Sciatic nerve (tissue), 2 donors: ENCODE measurements at regions of chr2 and their contacts with region 1.

Region 1: GRCh38 chr2:215949991-215950404 is 63.4 kb downstream of the MREG start:
- DNase-seq: no peak
- ATAC-seq: peak; percentile 38

Region 2: GRCh38 chr2:216034065-216034464 is 84.1 kb after region 1 on chr2:
- intact Hi-C with region 1: no loop called
- DNase-seq: peak; percentile 73
- ATAC-seq: peak; percentile 67

Region 3: DNA sequence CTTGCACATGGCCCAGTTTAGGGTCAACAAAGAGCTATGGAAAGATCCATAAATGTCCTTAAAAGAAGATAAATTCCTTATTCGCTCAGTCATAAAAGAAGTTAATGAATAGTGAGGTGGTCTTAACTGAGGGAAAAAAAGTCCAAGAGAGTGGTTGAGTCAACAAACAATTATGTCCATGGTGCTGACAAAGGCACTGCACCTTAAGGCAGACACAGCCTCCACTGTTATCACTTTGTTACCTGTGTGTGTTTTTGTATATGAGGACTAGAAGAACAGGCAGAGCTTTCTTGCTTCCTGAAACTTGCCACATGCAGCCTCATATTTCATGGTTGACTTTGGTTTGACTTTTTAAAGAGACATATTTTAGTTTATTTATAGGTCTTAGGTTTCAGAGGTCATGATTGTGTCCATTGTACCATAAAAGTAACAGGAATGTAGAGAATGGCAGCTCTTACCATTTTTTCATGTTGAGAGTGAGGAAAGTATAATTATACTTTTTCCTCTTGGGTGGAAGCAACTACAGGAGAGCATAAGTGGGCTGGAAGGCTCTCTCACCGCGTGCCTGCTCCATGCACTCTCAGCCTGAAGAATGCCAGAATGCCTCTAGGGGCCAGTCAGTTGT is 252.7 kb after region 1 on chr2:
- intact Hi-C with region 1: loop called (anchors 5 kb)
- DNase-seq: no peak
- ATAC-seq: no peak

Region 4: DNA sequence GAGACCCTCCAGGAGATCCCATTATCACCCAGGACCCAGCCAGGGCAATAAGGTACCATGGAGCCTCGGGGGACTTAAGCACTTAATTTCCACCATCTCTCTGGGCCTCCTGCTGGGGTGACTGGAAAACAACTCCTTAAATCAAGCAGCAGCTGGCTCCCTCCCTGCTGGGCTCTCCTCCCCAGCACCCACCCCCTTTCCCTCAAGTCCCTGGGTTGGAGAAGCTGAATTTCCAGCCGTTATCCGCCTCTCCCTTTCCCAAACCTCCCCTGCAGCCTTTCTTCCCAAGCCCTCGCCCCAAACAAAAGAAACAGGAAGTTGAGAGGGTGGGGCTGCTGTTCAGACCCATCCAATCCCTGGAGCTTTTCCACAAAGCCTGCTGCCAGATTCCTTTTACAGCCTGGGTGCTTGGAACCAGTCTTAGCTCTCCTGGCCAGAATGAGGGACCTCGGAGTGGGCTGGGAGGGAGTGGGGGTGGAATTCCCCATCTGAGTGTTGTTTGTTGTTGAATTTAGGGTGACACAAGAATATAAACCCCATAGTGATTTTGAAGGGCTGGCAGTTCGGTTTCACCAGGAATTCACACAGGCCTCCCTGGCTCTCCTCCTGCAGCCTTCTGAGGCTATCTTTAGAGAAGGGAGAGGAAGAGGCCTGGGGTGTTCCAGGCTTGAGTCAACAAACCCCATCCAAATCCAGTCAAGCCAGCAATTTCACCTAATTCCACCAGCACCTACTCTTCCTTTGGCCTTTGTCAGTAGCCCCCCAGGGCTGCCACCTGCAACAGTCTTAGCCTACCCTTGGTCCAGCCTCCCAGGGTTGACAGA is 390.0 kb after region 1 on chr2:
- intact Hi-C with region 1: no loop called
- DNase-seq: no peak
- ATAC-seq: peak; percentile 56